GM13976 (cell line): ENCODE measurements at regions of chr5 and their contacts with region 1.

Region 1: GRCh38 chr5:95781101-95781583 is 41.4 kb downstream of the GLRX start:
- DNase-seq: peak; percentile 78
- CTCF ChIP-seq: peak; percentile 92

Region 2: GRCh38 chr5:95846554-95847260 is 65.6 kb after region 1 on chr5:
- in situ Hi-C with region 1: loop called (anchors 5 kb)
- DNase-seq: peak; percentile 75
- CTCF ChIP-seq: peak; percentile 89

Region 3: DNA sequence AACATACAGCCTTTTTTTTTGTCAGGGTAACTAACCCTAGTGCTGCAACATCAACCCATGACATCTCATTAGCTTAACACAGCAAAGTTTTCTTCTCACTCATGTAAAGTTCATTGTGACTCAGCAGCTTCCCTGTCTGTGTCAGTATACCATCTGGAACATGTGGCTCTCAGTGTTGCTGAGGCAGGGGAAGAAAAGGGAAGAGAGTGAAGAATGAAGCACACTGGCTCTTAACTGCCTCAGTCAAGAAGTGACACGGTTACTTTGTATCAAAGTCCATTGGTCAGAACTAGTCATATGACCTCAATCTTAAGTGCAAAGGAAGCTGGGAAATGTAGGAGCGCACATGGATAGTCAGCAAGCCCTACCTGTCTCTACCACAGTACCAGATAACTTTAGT is 365.5 kb after region 1 on chr5:
- in situ Hi-C with region 1: no loop called
- DNase-seq: peak; percentile 26
- CTCF ChIP-seq: no peak

Region 4: DNA sequence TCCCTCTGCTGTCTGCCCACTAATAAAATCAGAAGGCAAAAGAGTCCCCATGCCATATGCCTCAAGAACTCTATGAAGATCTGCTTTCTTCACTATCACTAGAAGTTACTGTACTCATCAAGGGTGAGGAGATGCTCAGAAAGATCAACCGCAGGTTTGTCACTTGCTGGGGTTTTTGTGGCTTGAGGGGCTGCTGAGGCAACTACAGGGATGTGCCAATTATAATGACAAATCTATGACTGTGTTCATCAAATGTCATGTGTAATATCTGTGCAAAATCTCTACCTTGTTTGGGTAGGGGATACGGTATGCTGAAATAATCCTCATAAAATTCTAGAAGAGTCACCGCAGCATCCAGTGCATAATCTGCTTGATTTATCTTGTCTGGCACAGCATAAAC is 1013.6 kb after region 1 on chr5:
- in situ Hi-C with region 1: no loop called
- DNase-seq: no peak
- CTCF ChIP-seq: no peak